ENCODE measurements at regions of chr3 and their contacts with region 1.

Region 1: DNA sequence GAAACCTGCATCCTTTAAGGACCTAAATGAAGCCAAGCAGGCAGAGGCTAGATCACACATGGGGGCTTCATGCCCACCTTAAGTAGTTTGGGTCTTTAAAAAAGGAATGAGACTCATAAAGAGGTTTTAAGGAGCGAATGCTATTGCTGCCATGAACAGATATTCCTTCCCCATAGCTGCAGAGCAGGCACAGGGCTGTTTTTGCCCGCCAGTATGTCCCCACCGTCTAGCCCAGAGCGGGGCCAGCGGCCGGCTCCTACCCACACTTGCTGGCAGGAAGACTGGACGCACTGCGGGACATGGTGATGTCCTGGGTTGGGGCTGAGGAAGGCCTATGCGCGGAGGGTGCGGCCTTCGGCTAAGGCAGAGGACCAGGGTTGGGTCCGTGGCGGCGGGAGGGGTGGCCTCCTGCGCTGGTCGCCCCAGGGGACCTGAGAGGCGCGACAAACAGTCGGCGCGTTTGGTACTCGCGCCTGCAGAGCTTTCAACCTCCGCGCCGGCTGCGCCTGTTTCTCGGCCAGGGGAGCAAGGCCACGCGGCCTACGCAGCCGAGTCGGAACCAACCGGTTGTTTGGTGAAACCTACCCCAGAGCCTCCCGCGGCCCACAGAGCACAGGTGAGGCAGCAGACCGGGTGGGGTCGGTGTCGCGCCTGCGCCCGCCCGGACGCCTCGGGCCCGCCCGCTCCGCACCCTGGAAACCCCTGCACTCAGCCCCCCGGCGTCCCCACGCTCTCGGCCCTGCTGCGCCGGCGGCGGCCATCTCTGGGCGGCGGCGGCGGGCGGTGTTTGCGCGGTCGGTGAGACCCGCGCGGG is at the start of gene FAIM:
- DNase-seq: peak; percentile 60 to 86 (median 71)
- ATAC-seq: peak; percentile 65 to 88 (median 86)
- H3K4me3 ChIP-seq: peak within 1 kb of the TSS; percentile 64 to 94 (median 84)
- H3K27ac ChIP-seq: peak within 1 kb of the TSS; percentile 89 to 99 (median 96)
- H3K4me1 ChIP-seq: peaks cover 0 to 15% (median 7%) of the 10 kb centered on the region in 12 donors
- H3K27me3 ChIP-seq: peaks cover 0 to 3% (median 0%) of the 10 kb centered on the region in 9 donors
- CTCF ChIP-seq: no peak
- POLR2A ChIP-seq: no peak
- total RNA-seq, gene FAIM: 2.0 to 5.9 (median 3.6) TPM

Region 2: GRCh38 chr3:138675393-138675792 is 66.9 kb after region 1 on chr3:
- intact Hi-C with region 1: loop called in 1 of 10 experiments (anchors 5 kb)
- DNase-seq: no peak
- ATAC-seq: no peak
- H3K4me3 ChIP-seq: no peak overlapping the region
- H3K27ac ChIP-seq: no peak overlapping the region
- H3K4me1 ChIP-seq: peaks cover 0 to 14% (median 0%) of the 10 kb centered on the region in 12 donors
- H3K27me3 ChIP-seq: no peaks in the 10 kb centered on the region
- CTCF ChIP-seq: no peak
- POLR2A ChIP-seq: no peak

Measured in heart left ventricle (tissue), 16 donors.